Naive thymus-derived CD4-positive, alpha-beta T cell (primary cell): ENCODE measurements at regions of chr3 and their contacts with region 1.

Region 1: DNA sequence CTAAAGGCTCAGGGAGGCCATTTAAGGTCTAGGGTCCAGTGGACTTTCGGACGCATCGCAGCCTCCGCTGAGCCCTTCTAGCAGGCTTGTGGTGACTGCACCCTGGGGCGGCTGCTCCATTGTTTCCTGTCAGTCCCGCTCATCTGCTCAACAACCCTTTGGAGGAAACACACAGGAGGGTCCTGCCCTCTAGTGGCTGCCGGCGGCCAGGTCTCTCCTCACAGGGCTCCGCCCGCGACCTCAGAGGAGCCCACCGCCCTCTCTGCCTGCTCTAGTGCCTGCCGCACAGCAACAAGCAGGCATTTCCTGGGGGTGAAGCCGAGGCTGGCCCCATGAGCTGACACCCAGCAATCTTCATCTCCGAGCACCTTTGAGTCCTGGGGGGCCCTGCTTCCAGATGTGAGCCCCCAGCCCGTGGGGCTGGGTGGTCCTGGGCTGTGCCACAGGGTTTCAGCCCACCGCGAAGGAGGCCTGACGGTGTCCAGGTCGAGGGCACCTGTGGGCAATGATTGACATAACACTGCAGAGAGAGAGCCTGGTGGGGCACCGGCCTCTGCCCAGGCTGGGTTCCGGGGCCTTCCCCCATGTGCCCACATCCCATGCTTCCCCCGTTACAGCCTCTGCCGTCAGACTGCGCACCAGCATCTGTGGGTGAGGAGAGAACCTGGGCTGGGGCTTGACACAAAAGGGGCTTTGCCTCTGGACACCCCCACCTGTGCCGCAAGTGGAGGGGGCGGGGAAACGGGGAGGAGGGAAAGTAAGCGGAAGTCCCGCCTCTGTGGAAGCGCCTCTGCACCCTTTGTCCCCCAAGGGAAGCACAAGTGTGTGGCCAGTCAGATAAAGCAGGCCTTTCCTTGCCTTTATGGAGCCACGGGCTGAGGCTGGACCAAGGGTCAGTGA is 27.0 kb upstream of the SFMBT1 start:
- DNase-seq: peak; percentile 74 to 91 (median 88)
- ATAC-seq: peak; percentile 97
- H3K4me3 ChIP-seq: peak overlapping the region; percentile 82
- H3K4me3 Mint-ChIP-seq: peak overlapping the region; percentile 90 to 97 (median 92)
- H3K27ac ChIP-seq: peak overlapping the region; percentile 79
- H3K27ac Mint-ChIP-seq: peak overlapping the region; percentile 84 to 97 (median 95)
- H3K4me1 ChIP-seq: peaks cover 9 to 15% of the 10 kb centered on the region in 2 donors
- H3K4me1 Mint-ChIP-seq: peaks cover 12 to 24% (median 20%) of the 10 kb centered on the region in 7 donors
- H3K27me3 ChIP-seq: no peaks in the 10 kb centered on the region
- H3K27me3 Mint-ChIP-seq: peaks cover 0 to 6% (median 0%) of the 10 kb centered on the region in 5 donors

Region 2: GRCh38 chr3:52154117-52155094 is 918.5 kb before region 1 on chr3 and contains the start of gene POC1A:
- CTCF ChIA-PET with region 1: no interaction called
- POLR2A ChIA-PET with region 1: no interaction called
- intact Hi-C with region 1: no loop called
- DNase-seq: peak; percentile 73 to 90 (median 82)
- ATAC-seq: peak; percentile 92
- H3K4me3 ChIP-seq: peak within 1 kb of the TSS; percentile 98
- H3K4me3 Mint-ChIP-seq: peak within 1 kb of the TSS; percentile 88 to 98 (median 96)
- H3K27ac ChIP-seq: peak within 1 kb of the TSS; percentile 85
- H3K27ac Mint-ChIP-seq: peak within 1 kb of the TSS; percentile 87 to 98 (median 94)
- H3K4me1 ChIP-seq: peaks cover 4 to 6% of the 10 kb centered on the region in 2 donors
- H3K4me1 Mint-ChIP-seq: peaks cover 5 to 22% (median 6%) of the 10 kb centered on the region in 7 donors
- H3K27me3 ChIP-seq: no peaks in the 10 kb centered on the region
- H3K27me3 Mint-ChIP-seq: peaks cover 0 to 1% (median 0%) of the 10 kb centered on the region in 5 donors
- total RNA-seq, gene POC1A: 0.58 to 19.7 (median 1.2) TPM

Region 3: GRCh38 chr3:52536369-52537164 is 536.3 kb before region 1 on chr3 and contains the start of gene UQCC5:
- CTCF ChIA-PET with region 1: no interaction called
- POLR2A ChIA-PET with region 1: no interaction called
- intact Hi-C with region 1: loop called in 1 of 2 experiments (anchors 2 kb)
- DNase-seq: peak; percentile 89 to 98 (median 97)
- ATAC-seq: peak; percentile 95
- H3K4me3 ChIP-seq: peak within 1 kb of the TSS; percentile 67
- H3K4me3 Mint-ChIP-seq: peak within 1 kb of the TSS; percentile 96 to 100 (median 99)
- H3K27ac ChIP-seq: peak within 1 kb of the TSS; percentile 85
- H3K27ac Mint-ChIP-seq: peak within 1 kb of the TSS; percentile 96 to 99 (median 98)
- H3K4me1 ChIP-seq: peaks cover 24 to 30% of the 10 kb centered on the region in 2 donors
- H3K4me1 Mint-ChIP-seq: peaks cover 29 to 66% (median 50%) of the 10 kb centered on the region in 7 donors
- H3K27me3 ChIP-seq: no peaks in the 10 kb centered on the region
- H3K27me3 Mint-ChIP-seq: no peaks in the 10 kb centered on the region
- total RNA-seq, gene UQCC5: 5.4 to 11.9 (median 10.7) TPM

Region 4: GRCh38 chr3:52756141-52756540 is 316.8 kb before region 1 on chr3:
- CTCF ChIA-PET with region 1: no interaction called
- POLR2A ChIA-PET with region 1: no interaction called
- intact Hi-C with region 1: loop called in 1 of 2 experiments (anchors 5 kb)
- DNase-seq: no peak
- ATAC-seq: no peak
- H3K4me3 ChIP-seq: no peak overlapping the region
- H3K4me3 Mint-ChIP-seq: no peak overlapping the region
- H3K27ac ChIP-seq: no peak overlapping the region
- H3K27ac Mint-ChIP-seq: no peak overlapping the region
- H3K4me1 ChIP-seq: no peaks in the 10 kb centered on the region
- H3K4me1 Mint-ChIP-seq: peaks cover 0 to 5% (median 0%) of the 10 kb centered on the region in 7 donors
- H3K27me3 ChIP-seq: no peaks in the 10 kb centered on the region
- H3K27me3 Mint-ChIP-seq: no peaks in the 10 kb centered on the region

Region 5: GRCh38 chr3:52851348-52851747 is 221.6 kb before region 1 on chr3:
- CTCF ChIA-PET with region 1: interaction called, 3 read pairs
- POLR2A ChIA-PET with region 1: no interaction called
- intact Hi-C with region 1: loop called (anchors 1 kb)
- DNase-seq: peak in 5 of 9 donors; percentile 22 to 40 (median 35)
- ATAC-seq: peak; percentile 70
- H3K4me3 ChIP-seq: no peak overlapping the region
- H3K4me3 Mint-ChIP-seq: no peak overlapping the region
- H3K27ac ChIP-seq: no peak overlapping the region
- H3K27ac Mint-ChIP-seq: no peak overlapping the region
- H3K4me1 ChIP-seq: no peaks in the 10 kb centered on the region
- H3K4me1 Mint-ChIP-seq: no peaks in the 10 kb centered on the region
- H3K27me3 ChIP-seq: no peaks in the 10 kb centered on the region
- H3K27me3 Mint-ChIP-seq: no peaks in the 10 kb centered on the region

Region 6: GRCh38 chr3:52934630-52935530 is 138.0 kb before region 1 on chr3:
- CTCF ChIA-PET with region 1: interaction called, 6 read pairs
- POLR2A ChIA-PET with region 1: no interaction called
- intact Hi-C with region 1: loop called (anchors 1 kb)
- DNase-seq: peak in 8 of 9 donors; percentile 30 to 58 (median 45)
- ATAC-seq: peak; percentile 97
- H3K4me3 ChIP-seq: no peak overlapping the region
- H3K4me3 Mint-ChIP-seq: peak overlapping the region in 4 of 10 donors; percentile 13 to 69 (median 27)
- H3K27ac ChIP-seq: no peak overlapping the region
- H3K27ac Mint-ChIP-seq: peak overlapping the region in 8 of 9 donors; percentile 7 to 75 (median 53)
- H3K4me1 ChIP-seq: peaks cover 0 to 4% of the 10 kb centered on the region in 2 donors
- H3K4me1 Mint-ChIP-seq: peaks cover 5 to 25% (median 16%) of the 10 kb centered on the region in 7 donors
- H3K27me3 ChIP-seq: no peaks in the 10 kb centered on the region
- H3K27me3 Mint-ChIP-seq: no peaks in the 10 kb centered on the region

Region 7: DNA sequence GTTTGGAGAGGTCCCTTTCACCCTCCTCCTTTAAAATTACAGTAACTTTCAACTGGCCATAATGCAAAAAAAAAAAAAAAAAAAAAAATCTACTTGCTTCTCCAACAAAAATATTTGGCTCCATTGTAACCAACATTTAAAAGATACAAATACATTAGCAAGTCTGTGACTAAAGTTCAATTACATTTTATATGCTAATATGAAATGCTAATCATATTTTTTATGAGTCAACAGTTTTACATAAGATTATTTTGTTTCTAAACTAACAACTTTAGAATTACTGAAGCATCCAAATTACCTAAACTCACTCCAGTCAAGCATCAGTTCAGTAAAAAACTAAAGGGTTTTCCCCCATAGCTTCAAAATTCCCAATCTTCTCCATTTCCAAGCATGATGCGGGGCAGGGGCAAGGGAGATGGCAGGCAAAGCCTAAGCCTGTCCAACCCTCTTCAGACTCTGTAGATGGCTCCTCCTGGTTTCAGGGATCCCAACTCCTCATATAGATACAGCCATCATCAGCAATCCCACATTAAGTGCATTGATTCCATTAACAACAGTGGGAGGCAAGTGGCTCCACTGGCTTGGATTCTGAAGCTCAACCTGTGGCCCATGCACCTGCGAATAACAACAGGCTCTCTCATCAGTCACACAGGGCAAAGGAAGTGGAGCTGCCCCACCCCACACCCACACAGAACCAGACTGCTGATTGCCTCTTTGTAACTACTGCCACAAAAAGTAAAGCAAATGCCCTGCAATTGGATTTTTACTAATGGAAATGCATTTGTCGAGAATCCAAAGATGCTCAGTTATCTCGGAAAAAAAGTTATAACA is 42.1 kb before region 1 on chr3:
- CTCF ChIA-PET with region 1: no interaction called
- POLR2A ChIA-PET with region 1: no interaction called
- intact Hi-C with region 1: loop called in 1 of 2 experiments (anchors 5 kb)
- DNase-seq: peak in 7 of 9 donors; percentile 23 to 53 (median 49)
- ATAC-seq: peak; percentile 84
- H3K4me3 ChIP-seq: peak overlapping the region; percentile 20
- H3K4me3 Mint-ChIP-seq: peak overlapping the region; percentile 56 to 83 (median 72)
- H3K27ac ChIP-seq: peak overlapping the region; percentile 56
- H3K27ac Mint-ChIP-seq: peak overlapping the region; percentile 54 to 93 (median 89)
- H3K4me1 ChIP-seq: peaks cover 12 to 43% of the 10 kb centered on the region in 2 donors
- H3K4me1 Mint-ChIP-seq: peaks cover 18 to 86% (median 64%) of the 10 kb centered on the region in 7 donors
- H3K27me3 ChIP-seq: no peaks in the 10 kb centered on the region
- H3K27me3 Mint-ChIP-seq: no peaks in the 10 kb centered on the region